ENCODE measurements at regions of chr11 and their contacts with region 1.

Region 1: GRCh38 chr11:67113231-67113721 is 5.8 kb upstream of the KDM2A start:
- DNase-seq: peak; percentile 79
- ATAC-seq: peak; percentile 84
- H3K4me3 ChIP-seq: 0 out of 2 replicates have a peak overlapping the region, but pooled peaks have one; percentile 10
- H3K27ac ChIP-seq: peak overlapping the region; percentile 47
- H3K4me1 ChIP-seq: peaks cover 36% of the 10 kb centered on the region
- H3K27me3 ChIP-seq: no peaks in the 10 kb centered on the region
- CTCF ChIP-seq: no peak
- EP300 ChIP-seq: no peak
- POLR2A ChIP-seq: 0 out of 2 replicates have a peak, but pooled peaks have one; percentile 35
- RAD21 ChIP-seq: no peak

Region 2: GRCh38 chr11:67053896-67054842 is 59.1 kb before region 1 on chr11:
- CTCF ChIA-PET with region 1: no interaction called
- POLR2A ChIA-PET with region 1: no interaction called
- RAD21 ChIA-PET with region 1: no interaction called
- SMC1A ChIA-PET with region 1: no interaction called
- in situ Hi-C with region 1: no loop called
- intact Hi-C with region 1: no loop called
- DNase-seq: no peak
- ATAC-seq: peak; percentile 90
- H3K4me3 ChIP-seq: no peak overlapping the region
- H3K27ac ChIP-seq: no peak overlapping the region
- H3K4me1 ChIP-seq: peaks cover 10% of the 10 kb centered on the region
- H3K27me3 ChIP-seq: no peaks in the 10 kb centered on the region
- CTCF ChIP-seq: peak; percentile 73 to 89 (median 80)
- EP300 ChIP-seq: no peak
- POLR2A ChIP-seq: no peak
- RAD21 ChIP-seq: peak; percentile 87

Region 3: DNA sequence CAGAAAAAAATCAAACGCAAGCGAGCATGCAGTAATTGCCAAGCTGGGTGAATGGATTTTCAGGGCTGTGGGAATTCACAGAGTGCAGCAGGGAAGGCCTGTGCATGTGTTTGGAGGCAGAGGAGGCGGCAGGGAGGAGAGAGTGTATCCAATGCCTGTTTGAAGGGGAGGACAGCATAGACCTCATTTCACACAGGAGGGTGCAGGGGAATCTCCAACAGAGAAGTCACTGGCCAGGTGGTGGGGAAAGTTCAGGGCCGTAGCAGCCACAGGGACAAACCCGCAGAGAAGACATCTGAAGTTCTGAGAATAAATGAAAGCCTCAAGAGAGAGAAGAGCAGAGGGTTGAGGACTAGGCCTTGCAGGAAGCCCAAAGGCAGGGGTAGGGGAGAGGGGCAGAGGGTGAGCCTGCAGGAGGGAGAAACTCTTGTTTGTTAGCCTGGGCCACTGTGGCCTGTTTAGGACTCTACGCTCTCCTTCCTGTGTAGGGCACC is 13.4 kb before region 1 on chr11:
- CTCF ChIA-PET with region 1: interaction called, 16 read pairs
- POLR2A ChIA-PET with region 1: interaction called, 5 read pairs
- RAD21 ChIA-PET with region 1: interaction called, 10 read pairs
- SMC1A ChIA-PET with region 1: interaction called, 28 read pairs
- in situ Hi-C with region 1: no loop called
- intact Hi-C with region 1: no loop called
- DNase-seq: peak; percentile 63
- ATAC-seq: peak; percentile 88
- H3K4me3 ChIP-seq: peak overlapping the region; percentile 6; the same call in 1 of the 2 replicates
- H3K27ac ChIP-seq: peak overlapping the region; percentile 90
- H3K4me1 ChIP-seq: peaks cover 24% of the 10 kb centered on the region
- H3K27me3 ChIP-seq: no peaks in the 10 kb centered on the region
- CTCF ChIP-seq: no peak
- EP300 ChIP-seq: no peak
- POLR2A ChIP-seq: no peak
- RAD21 ChIP-seq: no peak

Measured in GM12878 (cell line).